Sigmoid colon (tissue), 7 donors: ENCODE measurements at regions of chr6 and their contacts with region 1.

Region 1: DNA sequence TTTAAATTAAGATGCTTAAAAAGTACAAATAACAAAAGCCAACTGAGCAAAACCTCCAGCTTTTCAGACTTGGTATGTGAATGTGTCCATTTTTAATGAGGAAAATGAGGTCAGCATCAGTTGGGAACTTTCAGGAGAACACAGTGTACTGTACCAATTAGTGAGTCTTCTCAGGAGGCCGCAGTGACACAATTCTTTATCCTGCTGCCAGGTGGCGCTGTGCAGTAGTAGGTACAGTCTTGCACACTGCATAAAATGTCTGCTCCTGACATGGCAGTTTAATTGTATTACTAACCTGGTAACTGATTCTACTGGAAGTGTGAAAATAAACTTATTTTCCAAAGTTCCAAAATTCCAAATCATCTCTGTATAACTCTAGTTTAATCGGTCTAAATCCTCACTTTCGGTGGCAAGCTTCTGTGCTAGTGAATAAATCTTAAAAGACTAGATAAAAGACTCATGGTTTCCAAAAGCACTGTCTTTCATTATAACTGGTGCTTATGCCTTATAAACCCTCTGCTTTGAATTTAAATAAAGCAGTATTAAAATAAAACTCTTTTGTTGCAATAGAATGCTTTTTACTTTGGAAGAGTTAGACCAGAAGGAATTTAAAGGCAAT is 214.8 kb upstream of the MMS22L start:
- DNase-seq: no peak
- H3K4me3 ChIP-seq: no peak overlapping the region
- H3K27ac ChIP-seq: no peak overlapping the region
- H3K4me1 ChIP-seq: no peaks in the 10 kb centered on the region
- H3K27me3 ChIP-seq: no peaks in the 10 kb centered on the region
- CTCF ChIP-seq: peak in 3 of 4 experiments; percentile 49 to 72 (median 56)
- EP300 ChIP-seq: peak in 1 of 4 donors; percentile 54
- POLR2A ChIP-seq: no peak

Region 2: DNA sequence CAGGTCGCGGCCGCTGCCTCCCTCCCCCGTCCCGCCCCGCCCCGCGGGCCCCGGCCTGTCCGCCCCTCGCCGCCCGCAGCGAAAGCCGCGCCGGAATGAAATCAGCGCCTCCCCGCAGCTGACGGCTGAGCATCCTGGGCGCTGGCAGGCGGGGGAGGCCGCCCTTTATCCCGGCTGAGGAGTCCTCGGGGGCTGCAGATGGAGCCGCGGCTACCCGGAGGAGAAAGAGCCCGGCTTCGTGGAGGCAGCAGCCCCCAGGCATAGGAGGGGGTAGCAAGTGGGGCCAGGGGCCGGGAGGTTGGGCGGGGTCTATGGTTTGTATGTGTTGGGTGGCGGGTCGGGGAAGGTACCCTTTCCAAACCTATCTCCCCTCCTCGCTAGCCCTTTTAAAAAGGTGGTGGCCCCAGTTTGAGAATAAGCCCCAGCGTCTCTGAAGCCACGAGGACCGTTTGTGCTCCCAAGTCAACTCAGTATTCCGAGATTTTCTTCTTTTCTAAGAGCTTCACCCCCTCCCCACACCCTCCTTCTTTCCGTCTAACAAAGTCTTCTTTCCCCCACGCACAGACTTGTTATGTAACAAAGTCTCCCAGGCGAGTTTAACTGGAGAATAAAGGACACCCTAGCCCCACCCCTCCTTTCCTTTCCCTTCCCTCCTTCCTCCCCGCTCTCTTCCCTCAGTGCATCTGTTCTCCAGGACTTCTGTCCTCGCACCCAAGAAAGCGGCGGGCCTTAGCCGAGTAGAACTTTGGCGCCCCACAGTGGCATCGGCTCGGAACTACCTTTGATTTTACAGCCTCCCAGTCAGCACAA is 1347.6 kb after region 1 on chr6:
- intact Hi-C with region 1: loop called (anchors 5 kb)
- DNase-seq: peak; percentile 82
- H3K4me3 ChIP-seq: peak overlapping the region in 3 of 4 donors; percentile 2 to 37 (median 31)
- H3K27ac ChIP-seq: no peak overlapping the region
- H3K4me1 ChIP-seq: peaks cover 0 to 47% (median 42%) of the 10 kb centered on the region in 4 donors
- H3K27me3 ChIP-seq: peaks cover 63 to 88% (median 84%) of the 10 kb centered on the region in 3 donors
- CTCF ChIP-seq: peak; percentile 40 to 84 (median 64)
- EP300 ChIP-seq: no peak
- POLR2A ChIP-seq: no peak